Activated CD4-positive, alpha-beta T cell treated with anti-CD3 and anti-CD28 coated beads, Interleukin-2, amount 10 ng/mL, durations not matched to agents 7 days and 5 days (primary cell): ENCODE measurements at regions of chr5 and their contacts with region 1.

Region 1: DNA sequence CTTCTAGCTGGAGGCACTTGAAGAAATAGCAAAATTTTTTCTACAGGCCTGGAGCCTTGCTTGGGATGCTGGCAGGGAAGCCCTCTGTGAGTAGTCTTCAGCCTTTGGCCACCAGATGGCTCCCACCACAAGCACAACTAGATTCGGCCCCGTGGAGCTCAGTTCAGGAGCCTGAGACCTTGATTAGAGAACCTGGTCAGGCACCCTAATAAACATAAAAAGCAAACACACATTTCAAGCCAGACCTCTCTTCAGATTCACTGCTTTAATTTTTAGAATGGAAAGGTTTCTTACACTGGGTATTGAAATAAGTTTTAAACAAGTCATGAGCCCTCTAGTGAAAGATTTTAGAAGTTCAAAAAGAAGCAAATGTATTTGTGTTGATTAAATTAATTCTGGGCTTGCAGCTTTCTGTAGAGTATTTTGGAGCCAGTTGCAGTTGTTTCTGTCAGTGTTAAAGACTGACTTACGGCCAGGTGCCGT is 41.4 kb downstream of the GLRX start:
- DNase-seq: peak; percentile 76
- H3K4me3 Mint-ChIP-seq: peak overlapping the region; percentile 56
- H3K27ac Mint-ChIP-seq: peak overlapping the region; percentile 79
- H3K4me1 Mint-ChIP-seq: peaks cover 27% of the 10 kb centered on the region
- H3K27me3 Mint-ChIP-seq: no peaks in the 10 kb centered on the region

Region 2: DNA sequence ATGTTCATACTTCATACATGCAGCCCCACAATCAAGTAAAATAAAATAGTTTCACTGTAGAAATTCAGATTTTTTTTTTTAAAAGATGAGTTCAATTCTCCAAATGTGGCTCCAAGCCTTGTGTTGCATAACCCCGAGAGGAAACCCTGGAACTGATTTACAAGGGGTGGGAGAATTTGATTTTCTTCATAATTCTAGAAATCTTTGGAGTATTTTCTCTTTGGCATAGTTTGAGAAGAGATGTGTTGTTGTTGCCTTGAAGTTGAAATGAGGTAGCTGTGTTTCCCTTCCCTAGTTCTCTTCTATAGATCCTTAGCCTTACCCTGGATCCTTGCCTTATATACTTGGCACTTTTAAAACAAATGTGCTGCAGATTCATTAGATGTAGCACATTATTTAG is 46.9 kb before region 1 on chr5:
- CTCF ChIA-PET with region 1: no interaction called
- POLR2A ChIA-PET with region 1: no interaction called
- DNase-seq: no peak
- H3K4me3 Mint-ChIP-seq: no peak overlapping the region
- H3K27ac Mint-ChIP-seq: no peak overlapping the region
- H3K4me1 Mint-ChIP-seq: peaks cover 24% of the 10 kb centered on the region
- H3K27me3 Mint-ChIP-seq: peaks cover 52% of the 10 kb centered on the region

Region 3: DNA sequence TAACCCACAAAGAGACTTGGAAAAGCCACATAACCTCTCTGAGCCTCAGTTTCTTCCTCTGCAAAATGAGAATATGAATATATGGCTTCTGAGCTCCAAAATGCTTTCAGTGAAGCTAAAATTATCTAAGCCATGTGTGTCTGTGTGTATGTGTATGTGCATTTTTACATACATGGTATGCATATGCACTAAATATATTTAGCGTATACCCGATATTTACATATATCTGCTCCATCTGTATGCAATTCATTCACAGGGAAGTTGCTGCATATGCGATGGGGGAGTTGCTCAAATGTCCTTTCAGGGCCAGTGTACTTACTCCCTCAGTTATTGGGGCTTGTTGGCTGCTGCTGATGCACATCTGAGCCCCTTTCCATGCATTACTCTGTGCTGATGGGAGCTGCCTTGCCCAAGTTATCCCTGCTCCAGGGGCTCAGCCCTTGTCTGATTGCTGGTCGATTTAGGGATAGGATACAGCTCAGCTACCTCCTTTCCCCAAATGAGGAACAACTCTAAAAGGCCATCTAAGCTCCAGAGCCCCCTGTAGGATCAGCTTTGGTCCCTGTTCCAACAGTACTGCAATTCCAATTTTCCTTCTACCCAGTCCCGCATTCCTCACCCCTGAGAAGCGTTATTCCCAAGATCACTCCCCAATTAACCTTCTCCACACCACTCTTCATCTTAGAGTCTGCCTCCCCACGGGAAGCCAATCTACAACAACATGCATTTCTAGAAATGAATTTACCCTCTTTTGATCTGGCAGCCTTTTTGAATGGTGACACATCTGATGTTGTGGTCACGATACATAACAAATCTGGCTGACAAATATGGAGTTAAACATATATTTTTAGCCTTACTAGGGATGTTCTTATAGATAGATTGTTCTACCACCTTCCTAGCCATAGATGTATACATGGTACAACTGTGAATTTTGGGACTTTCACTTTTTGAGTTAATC is 34.1 kb before region 1 on chr5:
- CTCF ChIA-PET with region 1: interaction called, 11 read pairs
- POLR2A ChIA-PET with region 1: no interaction called
- DNase-seq: peak; percentile 12
- H3K4me3 Mint-ChIP-seq: no peak overlapping the region
- H3K27ac Mint-ChIP-seq: no peak overlapping the region
- H3K4me1 Mint-ChIP-seq: peaks cover 10% of the 10 kb centered on the region
- H3K27me3 Mint-ChIP-seq: peaks cover 3% of the 10 kb centered on the region

Region 4: DNA sequence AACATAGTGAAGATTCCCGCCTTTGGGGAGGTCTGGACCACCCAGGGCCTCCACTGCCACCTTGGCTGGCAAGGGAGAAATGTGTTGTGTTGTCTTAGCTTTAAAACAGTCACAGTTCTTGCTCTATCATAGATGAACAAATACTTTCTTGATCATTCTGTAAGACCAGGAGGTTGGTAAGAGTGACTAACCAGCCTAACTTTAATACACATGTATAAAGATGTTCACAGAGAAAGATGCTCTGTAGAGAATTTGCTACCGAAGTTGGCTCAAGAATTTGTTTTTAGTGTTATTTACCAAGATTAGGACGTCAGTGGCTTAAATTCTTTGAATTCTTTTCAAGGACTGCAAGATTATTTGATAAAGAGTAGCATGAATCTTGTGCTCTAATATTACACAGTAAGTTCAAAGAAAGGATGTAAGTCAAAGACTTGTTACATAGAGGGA is 13.0 kb after region 1 on chr5:
- CTCF ChIA-PET with region 1: interaction called, 17 read pairs
- POLR2A ChIA-PET with region 1: no interaction called
- DNase-seq: no peak
- H3K4me3 Mint-ChIP-seq: no peak overlapping the region
- H3K27ac Mint-ChIP-seq: no peak overlapping the region
- H3K4me1 Mint-ChIP-seq: peaks cover 6% of the 10 kb centered on the region
- H3K27me3 Mint-ChIP-seq: no peaks in the 10 kb centered on the region

Region 5: DNA sequence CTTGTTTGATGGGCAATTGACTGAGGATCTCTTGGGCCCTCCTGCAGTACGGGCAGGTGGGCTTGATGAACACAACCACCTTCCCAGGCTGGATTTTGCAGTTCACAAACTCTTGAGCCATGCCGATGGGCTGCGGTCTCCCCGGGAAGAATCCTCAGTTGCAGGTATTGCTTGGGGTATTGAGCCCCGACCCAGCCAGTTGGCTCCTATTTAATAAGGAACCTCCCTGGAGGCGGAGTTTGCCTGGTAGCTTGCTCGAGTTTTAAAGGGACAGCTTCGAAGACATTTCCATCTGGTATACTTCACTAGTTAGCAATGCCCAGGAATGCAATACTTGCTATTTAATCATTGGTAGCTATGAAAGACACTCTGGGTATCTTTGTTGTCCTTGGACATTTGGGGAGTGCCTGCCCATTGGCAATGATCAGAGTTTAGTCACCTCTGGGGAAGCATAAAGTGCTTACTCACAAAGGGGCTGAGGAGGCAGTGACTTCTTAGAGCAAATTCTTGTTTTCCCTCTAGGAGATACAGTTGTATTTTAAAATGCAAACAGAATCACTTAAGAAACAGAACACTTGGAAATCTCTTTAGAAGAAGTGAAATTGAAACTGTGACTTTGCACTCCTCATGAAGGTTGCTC is 41.5 kb after region 1 on chr5 and contains the start of gene GLRX:
- CTCF ChIA-PET with region 1: interaction called, 10 read pairs
- POLR2A ChIA-PET with region 1: no interaction called
- DNase-seq: peak; percentile 77
- H3K4me3 Mint-ChIP-seq: peak within 1 kb of the TSS; percentile 91
- H3K27ac Mint-ChIP-seq: peak within 1 kb of the TSS; percentile 93
- H3K4me1 Mint-ChIP-seq: peaks cover 69% of the 10 kb centered on the region
- H3K27me3 Mint-ChIP-seq: no peaks in the 10 kb centered on the region
- total RNA-seq, gene GLRX: 60.2 to 61.1 TPM

Region 6: DNA sequence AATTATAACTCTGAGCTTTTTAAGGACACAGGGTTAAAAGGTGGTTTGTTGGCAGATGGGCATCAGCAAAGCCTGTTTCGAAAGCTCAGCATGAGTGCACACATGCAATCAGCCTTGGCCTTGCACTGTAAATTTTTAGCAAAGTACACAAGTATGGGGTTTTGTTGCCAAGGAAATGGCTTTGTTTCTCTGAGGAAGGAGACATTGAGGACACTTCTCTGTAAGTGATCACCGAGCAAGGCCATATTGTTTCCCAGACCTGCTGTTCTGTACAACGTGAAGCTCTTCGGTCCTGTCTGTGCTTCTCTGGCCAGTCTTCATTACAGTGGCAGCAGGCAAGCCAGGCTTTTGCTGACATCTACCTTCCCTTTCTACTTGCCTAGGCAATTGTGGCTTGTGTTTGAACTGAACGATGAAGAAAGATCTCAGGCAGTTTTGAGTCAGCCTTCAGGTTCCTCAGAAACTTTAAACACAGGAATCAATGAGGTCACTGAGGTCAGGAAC is 69.3 kb after region 1 on chr5:
- CTCF ChIA-PET with region 1: interaction called, 26 read pairs
- POLR2A ChIA-PET with region 1: no interaction called
- DNase-seq: no peak
- H3K4me3 Mint-ChIP-seq: no peak overlapping the region
- H3K27ac Mint-ChIP-seq: no peak overlapping the region
- H3K4me1 Mint-ChIP-seq: peaks cover 8% of the 10 kb centered on the region
- H3K27me3 Mint-ChIP-seq: peaks cover 12% of the 10 kb centered on the region